ENCODE measurements at regions of chr2 and their contacts with region 1.

Region 1: DNA sequence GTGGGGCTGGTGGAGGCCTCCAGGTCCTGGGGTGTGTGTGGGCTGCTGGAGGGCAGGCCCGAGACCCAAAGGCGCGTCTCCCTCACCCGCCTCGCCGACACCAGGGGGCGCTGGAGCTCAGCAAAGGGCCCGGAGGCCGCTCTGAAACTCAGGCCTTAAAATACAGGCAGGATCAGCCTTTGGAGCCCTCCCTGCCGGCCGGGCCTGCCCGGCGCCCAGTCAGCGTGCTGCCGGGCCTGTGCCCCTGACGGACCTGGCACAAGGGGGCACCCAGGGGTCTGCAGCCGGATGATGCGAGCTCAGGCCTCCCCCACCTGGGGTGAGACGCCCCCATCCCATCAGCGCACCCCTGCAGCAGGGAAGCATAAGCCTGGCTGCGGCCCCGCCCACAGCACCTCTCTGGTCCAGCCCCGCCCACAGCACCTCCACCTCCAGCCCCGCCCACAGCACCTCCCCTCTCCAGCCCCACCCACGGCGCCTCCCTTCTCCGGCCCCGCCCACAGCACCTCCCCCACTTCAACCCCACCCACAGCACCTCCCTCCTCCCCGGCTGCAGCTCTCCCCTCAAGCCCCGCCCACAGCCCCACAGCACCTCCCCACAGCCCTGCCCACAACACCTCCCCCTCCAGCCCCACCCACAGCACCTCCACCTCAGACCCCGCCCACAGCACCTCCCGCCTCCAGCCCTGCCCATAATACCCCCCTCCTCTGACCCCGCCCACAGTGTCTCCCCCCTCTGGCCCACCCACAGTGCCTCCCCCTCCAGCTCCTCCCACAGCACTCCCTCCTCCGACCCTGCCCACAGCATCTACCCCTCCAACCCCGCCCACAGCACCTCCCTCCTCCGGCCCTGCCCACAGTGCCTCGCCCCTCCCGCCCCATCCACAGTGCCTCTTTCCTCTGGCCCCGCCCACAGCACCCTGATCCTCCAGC is 92.8 kb upstream of the OTOS start:
- DNase-seq: peak; percentile 90
- ATAC-seq: peak; percentile 79

Region 2: DNA sequence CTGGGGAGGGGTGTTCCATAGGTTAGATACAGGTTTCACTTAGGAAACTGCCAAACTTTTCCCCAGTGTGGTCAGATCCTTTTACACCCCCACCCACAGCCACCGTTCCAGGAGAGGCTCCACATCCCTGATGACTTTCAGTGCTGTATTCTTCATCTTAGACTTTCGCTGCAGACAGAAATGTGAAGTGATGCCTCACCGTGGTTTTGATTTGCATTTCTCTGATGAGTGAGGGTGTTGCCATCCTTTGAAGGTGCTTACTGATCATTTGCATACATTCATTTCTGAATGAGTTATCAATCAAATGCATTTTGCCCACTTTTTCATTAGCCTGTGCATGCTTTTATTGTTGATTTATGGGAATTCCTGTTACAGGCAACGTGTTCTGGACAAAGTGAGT is 112.0 kb before region 1 on chr2:
- intact Hi-C with region 1: no loop called
- DNase-seq: no peak
- ATAC-seq: no peak

Region 3: DNA sequence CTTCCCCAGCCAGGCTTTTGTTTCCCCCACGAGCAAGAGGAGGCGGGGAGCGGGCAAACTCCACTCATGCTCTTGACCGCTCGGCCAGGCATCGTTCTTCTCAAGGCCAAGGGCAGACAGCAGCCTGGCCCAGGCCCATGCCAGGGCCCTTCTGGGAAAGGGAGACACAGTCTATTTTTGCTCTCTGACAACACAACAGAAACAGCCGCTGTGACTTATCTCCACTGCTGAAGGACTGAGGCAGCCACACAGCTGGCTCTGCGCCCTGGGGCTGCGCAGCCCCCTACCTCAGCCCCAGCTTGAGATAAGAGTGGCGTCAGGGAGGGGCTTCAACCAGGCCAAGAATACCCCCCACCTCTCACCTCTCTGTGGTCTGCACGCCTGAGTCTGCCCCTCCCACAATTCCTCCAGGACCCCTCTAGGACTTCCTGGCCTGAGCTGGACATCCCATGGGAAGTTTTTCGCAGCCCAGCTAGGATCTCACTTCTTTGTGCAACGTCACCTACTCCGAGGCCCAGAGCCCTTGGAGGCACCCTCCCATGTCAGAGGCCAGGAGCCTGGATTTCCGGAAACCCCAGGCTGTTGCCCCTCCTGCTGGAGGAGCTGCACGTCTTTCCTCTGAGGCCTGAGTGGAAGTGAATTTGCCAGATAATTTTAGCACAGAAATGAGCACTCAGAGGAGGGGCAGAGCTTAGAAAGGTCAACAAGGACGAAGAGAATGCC is 26.1 kb after region 1 on chr2:
- intact Hi-C with region 1: loop called (anchors 2 kb)
- DNase-seq: peak; percentile 89
- ATAC-seq: peak; percentile 93

Region 4: DNA sequence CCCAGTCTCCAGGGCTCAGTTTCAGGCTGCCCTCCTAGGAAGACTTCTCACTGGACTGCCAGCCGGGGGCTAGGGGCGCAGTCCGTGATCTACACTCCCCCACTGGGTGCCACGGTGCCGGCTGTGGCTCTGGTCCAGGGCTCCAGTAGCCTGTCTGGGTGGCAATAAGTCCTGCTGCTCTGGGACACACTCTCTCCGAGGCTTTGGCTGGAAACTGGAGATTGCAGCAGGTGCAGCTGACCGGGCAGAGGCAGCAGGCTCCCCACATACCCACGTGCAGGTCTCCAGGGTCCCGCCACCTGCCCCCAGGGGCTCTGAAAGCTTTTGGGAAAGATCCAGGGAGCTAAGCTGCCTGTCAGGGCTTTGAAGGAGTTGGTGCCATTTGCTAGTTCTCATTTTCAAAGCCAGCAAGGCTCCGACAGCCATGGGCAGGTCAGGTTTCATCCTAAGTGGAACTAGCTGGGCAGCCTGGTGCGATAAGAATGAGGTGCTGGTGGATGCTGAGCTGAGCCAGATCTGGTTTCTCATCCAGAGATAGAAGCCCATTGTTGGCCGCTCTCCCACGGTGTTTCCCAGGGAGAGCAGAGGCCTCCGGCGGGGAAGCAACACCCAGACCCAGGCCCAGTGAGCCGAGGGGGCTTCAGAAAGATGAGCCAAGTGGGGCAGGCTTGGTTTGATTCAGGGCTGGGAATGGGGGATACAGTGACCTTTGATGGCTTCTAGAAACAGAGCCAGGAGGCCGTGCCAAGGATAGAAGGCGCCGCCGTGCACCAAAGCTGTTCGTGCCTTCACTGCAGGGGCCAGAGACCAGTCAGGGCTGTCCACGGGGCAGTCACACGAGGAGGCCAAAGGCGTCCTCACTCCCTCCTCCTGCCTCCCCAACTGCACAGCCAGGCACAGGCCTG is 60.6 kb after region 1 on chr2:
- intact Hi-C with region 1: loop called (anchors 10 kb)
- DNase-seq: peak; percentile 77
- ATAC-seq: peak; percentile 75

Region 5: DNA sequence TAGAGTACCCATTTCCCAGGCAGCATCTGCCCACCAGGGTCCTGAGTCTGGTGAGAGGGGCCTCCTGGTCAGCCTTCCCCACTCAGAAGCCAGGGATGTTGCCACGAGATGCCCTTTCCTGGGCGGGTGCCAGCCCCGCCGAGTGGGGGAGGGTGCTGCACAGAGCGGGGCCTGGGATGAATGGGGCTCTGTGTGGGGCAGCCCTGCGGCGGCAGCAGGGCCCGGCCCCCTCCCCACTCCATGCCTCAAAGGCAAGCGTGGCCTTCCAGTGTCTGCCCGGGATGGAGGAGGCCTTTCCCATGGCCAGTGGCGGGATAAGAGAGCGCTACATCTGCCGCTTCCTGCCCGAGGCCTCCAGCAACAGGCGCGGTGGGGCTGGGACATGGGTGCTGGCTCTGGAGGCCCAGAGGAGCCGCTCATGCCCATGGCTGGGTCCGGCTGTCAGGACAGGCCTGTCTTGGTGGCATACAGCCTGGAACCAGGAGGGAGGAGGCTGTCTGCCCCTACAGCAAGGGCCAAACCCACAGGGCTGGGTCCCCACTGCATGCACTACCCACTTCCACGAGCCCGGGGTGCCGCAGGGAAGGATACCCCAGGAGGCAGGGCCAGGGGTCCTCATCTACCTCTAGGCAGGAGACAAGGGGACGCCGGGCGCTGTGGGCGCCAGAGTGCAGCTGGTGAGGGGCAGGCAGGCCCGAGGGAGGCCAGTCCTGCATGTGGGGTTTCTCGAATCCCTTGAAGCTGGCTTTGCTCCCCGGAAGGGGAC is 107.0 kb after region 1 on chr2:
- intact Hi-C with region 1: loop called (anchors 10 kb)
- DNase-seq: no peak
- ATAC-seq: no peak

Region 6: GRCh38 chr2:240369801-240370585 is 136.8 kb after region 1 on chr2:
- intact Hi-C with region 1: loop called (anchors 10 kb)
- DNase-seq: peak; percentile 82
- ATAC-seq: peak; percentile 80

Region 7: DNA sequence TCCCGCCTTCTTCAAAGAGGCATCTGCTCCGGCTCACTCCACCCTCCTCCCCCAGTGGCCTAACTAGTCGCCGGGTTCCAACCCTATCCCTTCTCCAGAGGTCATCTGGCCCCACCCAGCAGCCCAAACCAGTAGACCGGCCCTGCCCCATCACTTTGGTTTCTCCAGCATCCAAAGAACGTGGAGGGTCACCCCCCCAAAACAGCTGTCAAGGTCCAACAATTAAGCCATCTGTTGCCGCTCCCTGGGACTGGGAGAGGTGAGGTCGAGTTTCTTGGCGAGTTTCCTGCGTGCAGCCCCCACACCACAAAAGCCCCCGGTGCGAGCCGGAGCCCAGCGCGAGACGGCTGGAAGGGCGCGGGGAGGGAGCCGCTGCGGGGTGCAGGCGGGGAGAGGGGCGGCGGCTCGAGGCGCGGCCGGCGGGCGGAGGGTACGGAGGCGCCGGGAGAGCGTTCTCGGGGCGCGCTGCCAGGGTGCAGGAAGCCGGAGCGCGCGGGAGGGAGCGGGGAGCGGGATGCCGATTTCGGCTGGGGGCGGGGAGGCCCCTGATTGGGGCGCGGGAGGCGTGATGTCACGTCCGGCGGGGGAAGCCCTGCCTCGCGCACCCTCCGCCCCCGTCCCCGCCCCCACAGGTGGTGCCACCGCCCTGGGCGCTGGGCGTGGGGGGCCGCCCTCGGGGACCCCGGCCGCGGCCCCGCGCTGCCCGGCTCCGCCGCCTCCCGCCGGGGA is 201.7 kb after region 1 on chr2:
- intact Hi-C with region 1: loop called (anchors 2 kb)
- DNase-seq: peak; percentile 95
- ATAC-seq: peak; percentile 80